ENCODE measurements at regions of chr15 and their contacts with region 1.

Region 1: GRCh38 chr15:63186065-63186464 is 3.3 kb upstream of the RAB8B start:
- DNase-seq: peak; percentile 62
- H3K4me3 ChIP-seq: no peak overlapping the region
- H3K27me3 ChIP-seq: no peaks in the 10 kb centered on the region
- CTCF ChIP-seq: no peak

Region 2: GRCh38 chr15:63277893-63278456 is 91.9 kb after region 1 on chr15:
- CTCF ChIA-PET with region 1: no interaction called
- POLR2A ChIA-PET with region 1: interaction called, 10 read pairs
- DNase-seq: no peak
- H3K4me3 ChIP-seq: peak overlapping the region; percentile 92
- H3K27me3 ChIP-seq: no peaks in the 10 kb centered on the region
- CTCF ChIP-seq: no peak